ENCODE measurements at regions of chr3 and their contacts with region 1.

Region 1: GRCh38 chr3:138051946-138052802 is 42.2 kb downstream of the CLDN18 start:
- DNase-seq: no peak
- H3K4me3 ChIP-seq: no peak overlapping the region
- CTCF ChIP-seq: peak; percentile 78

Region 2: DNA sequence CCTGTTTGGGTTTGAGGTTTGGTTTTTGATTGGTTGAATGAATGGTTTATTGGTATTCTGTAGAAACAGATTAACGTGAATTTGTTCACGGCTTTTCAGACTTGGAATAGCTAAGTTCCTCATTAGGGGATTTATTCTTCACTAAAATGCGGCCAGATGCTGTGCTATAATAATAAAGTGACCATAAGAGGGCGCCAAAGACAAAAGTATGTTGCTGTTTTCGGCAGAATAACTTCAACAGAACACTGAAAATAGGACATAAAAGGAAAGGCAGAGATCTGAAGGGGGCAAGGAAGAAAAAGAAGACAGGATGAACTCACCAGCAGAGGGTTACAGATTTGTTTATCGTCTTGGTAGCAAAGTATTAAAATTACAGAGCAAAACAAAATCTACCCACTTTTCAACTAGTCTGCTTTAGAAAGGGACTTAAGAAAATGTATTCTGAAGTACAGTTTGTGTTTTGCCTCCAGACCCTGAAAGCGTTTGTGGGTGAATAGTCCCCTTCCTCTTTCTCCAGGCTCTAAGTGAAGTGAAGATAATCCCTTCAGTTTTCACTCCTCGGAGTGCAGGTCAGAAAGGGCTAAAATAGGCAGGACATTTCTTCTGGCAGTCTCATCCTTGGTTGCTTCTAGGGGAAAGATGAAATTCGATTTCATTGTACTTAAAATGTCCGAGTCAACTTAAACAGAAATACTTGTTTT is 946.7 kb before region 1 on chr3:
- CTCF ChIA-PET with region 1: interaction called, 21 read pairs
- POLR2A ChIA-PET with region 1: no interaction called
- DNase-seq: no peak
- H3K4me3 ChIP-seq: no peak overlapping the region
- CTCF ChIP-seq: peak; percentile 40

Region 3: DNA sequence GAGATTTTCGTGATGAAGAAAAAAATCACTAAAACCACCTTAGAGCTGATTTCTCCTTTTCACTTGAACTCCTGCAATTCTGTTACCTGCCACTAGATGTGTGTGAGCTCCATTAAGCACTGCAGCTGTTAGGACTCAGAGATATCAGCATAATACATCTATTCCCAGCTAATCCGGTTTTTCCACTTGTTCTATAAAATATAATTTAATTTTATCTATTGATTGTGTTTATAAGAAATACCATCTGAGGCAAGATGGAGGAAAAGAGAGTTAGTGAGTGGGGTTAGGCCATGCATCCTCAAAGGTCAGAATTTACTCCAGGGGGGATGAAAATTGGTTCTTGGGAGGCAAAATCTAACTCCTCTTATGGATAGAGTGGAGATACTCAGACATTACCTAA is 941.7 kb before region 1 on chr3:
- CTCF ChIA-PET with region 1: interaction called, 21 read pairs
- POLR2A ChIA-PET with region 1: no interaction called
- DNase-seq: no peak
- H3K4me3 ChIP-seq: no peak overlapping the region
- CTCF ChIP-seq: peak; percentile 75

Region 4: GRCh38 chr3:137970914-137971831 is 81.0 kb before region 1 on chr3:
- CTCF ChIA-PET with region 1: interaction called, 15 read pairs
- POLR2A ChIA-PET with region 1: no interaction called
- DNase-seq: no peak
- H3K4me3 ChIP-seq: no peak overlapping the region
- CTCF ChIP-seq: peak; percentile 91

Region 5: DNA sequence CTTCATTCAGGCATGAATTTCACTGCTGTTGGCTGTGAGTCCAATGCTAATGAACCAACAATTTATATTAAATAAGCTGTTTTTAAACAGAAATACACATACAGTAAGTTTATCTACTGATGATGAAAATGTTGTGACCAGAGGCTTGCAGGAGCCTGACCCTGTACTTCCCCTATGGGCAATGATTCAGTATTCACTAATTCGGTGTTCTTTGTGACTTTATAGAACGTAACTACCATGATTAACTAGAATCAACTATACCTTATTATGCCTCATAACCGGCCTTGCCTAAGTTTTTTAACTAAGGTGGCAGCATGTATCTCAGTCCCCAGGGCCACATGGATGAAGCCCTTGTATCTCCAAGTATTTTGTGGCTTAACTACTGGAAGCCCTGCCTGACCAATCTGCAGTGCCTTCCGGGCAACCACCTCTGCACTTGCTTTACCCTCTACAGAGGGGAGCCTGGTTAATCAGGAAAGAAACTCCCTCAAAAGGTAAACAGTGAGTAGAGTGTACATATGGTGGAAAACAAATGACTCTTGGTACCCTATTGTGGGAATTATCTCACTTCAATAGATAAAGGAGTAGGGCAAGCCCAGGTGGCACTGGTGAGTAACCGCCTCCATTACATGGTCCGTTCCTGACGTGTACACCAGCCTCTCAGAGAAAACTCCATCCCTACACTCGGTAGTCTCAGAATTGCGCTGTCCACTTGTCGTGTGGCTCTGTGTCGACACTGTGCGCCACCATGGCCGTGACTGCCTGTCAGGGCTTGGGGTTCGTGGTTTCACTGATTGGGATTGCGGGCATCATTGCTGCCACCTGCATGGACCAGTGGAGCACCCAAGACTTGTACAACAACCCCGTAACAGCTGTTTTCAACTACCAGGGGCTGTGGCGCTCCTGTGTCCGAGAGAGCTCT is 53.8 kb before region 1 on chr3:
- CTCF ChIA-PET with region 1: no interaction called
- POLR2A ChIA-PET with region 1: no interaction called
- DNase-seq: no peak
- H3K4me3 ChIP-seq: no peak overlapping the region
- CTCF ChIP-seq: no peak

Region 6: GRCh38 chr3:138036572-138036971 is 15.6 kb before region 1 on chr3:
- CTCF ChIA-PET with region 1: interaction called, 38 read pairs
- POLR2A ChIA-PET with region 1: no interaction called
- DNase-seq: no peak
- H3K4me3 ChIP-seq: no peak overlapping the region
- CTCF ChIP-seq: no peak

Region 7: GRCh38 chr3:138068579-138069174 is 16.5 kb after region 1 on chr3:
- CTCF ChIA-PET with region 1: interaction called, 39 read pairs
- POLR2A ChIA-PET with region 1: no interaction called
- DNase-seq: no peak
- H3K4me3 ChIP-seq: no peak overlapping the region
- CTCF ChIP-seq: peak; percentile 99

Region 8: GRCh38 chr3:138314751-138315150 is 262.6 kb after region 1 on chr3:
- CTCF ChIA-PET with region 1: no interaction called
- POLR2A ChIA-PET with region 1: no interaction called
- DNase-seq: no peak
- H3K4me3 ChIP-seq: no peak overlapping the region
- CTCF ChIP-seq: no peak

Region 9: GRCh38 chr3:138629526-138629925 is 577.4 kb after region 1 on chr3:
- CTCF ChIA-PET with region 1: no interaction called
- POLR2A ChIA-PET with region 1: no interaction called
- DNase-seq: no peak
- H3K4me3 ChIP-seq: no peak overlapping the region
- CTCF ChIP-seq: no peak